CD8-positive, alpha-beta T cell (primary cell): ENCODE measurements at regions of chr21 and their contacts with region 1.

Region 1: DNA sequence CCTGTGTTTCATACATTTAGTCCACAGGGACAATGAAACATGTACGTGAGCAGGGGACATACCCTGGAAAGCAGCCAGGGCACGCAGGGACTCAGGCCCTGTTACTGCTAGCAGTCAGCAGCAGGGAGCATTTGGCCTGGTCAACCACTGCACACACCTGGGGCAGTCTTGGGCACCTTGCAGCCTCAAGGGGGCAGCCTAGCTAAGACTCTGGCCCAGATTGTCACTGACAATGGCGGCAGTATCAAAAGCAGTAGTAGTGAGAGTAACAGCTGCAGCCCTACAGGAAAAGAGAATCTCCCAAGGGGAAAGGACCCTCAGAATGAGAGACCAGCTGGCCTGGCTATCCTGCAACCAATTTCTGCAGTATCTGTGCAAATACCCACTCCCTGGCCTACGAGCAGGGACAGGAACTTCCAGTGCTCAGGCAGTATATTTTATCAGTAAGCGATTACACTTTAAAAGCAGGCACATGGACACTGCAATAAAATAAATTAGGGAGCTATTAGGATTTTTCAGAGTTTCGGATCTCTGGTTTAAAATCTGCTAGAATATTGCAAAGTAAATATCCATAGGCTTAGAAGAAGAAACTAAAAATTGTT is 475.6 kb downstream of the LTN1 start:
- DNase-seq: peak; percentile 26 to 73 (median 57)
- ATAC-seq: peak; percentile 91
- H3K4me3 ChIP-seq: no peak overlapping the region
- H3K4me3 Mint-ChIP-seq: no peak overlapping the region
- H3K27ac ChIP-seq: no peak overlapping the region
- H3K27ac Mint-ChIP-seq: no peak overlapping the region
- H3K4me1 ChIP-seq: no peaks in the 10 kb centered on the region
- H3K4me1 Mint-ChIP-seq: peaks cover 4% of the 10 kb centered on the region
- H3K27me3 ChIP-seq: no peaks in the 10 kb centered on the region
- H3K27me3 Mint-ChIP-seq: no peaks in the 10 kb centered on the region
- CTCF ChIP-seq: peak; percentile 63

Region 2: DNA sequence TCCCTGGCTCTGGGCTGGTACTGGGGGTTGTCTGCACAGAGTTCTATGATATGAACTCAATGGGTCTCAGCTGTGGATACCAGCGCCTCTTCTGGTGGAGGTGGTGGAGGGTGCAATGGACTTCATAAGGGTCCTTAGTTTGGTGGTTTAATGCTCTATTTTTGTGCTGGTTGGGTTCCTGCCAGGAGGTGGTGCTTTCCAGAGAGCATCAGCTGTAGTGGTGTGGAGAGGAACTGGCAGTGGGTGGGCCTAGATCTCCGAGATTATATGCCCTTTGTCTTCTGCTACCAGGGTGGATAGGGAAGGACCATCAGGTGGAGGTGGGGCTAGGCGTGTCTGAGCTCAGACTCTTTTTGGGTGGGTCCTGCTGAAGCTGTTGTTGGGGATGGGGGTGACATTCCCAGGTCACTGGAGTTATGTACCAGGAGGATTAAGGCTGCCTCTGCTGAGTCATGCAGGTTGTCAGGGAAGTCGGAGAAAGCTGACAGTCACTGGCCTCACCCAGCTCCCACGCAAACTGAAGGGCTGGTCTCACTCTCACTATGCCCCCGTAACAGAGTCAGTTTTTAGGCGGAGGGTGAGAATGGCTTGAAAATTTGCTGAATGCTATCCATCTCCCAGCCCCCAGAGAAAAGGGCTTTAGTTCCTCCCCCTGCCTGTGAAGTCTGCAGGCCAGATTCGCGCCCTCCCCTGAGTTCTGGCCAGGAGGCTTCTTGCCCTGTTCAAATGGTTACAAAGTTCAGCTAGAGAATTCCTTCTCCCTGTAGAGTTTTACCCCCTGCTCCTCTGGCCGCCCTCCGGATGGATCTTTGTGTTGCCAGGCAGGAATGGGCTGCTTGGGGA is 427.3 kb before region 1 on chr21:
- CTCF ChIA-PET with region 1: no interaction called
- POLR2A ChIA-PET with region 1: no interaction called
- intact Hi-C with region 1: no loop called
- DNase-seq: no peak
- ATAC-seq: no peak
- H3K4me3 ChIP-seq: no peak overlapping the region
- H3K4me3 Mint-ChIP-seq: no peak overlapping the region
- H3K27ac ChIP-seq: no peak overlapping the region
- H3K27ac Mint-ChIP-seq: no peak overlapping the region
- H3K4me1 ChIP-seq: no peaks in the 10 kb centered on the region
- H3K4me1 Mint-ChIP-seq: no peaks in the 10 kb centered on the region
- H3K27me3 ChIP-seq: no peaks in the 10 kb centered on the region
- H3K27me3 Mint-ChIP-seq: no peaks in the 10 kb centered on the region
- CTCF ChIP-seq: no peak

Region 3: DNA sequence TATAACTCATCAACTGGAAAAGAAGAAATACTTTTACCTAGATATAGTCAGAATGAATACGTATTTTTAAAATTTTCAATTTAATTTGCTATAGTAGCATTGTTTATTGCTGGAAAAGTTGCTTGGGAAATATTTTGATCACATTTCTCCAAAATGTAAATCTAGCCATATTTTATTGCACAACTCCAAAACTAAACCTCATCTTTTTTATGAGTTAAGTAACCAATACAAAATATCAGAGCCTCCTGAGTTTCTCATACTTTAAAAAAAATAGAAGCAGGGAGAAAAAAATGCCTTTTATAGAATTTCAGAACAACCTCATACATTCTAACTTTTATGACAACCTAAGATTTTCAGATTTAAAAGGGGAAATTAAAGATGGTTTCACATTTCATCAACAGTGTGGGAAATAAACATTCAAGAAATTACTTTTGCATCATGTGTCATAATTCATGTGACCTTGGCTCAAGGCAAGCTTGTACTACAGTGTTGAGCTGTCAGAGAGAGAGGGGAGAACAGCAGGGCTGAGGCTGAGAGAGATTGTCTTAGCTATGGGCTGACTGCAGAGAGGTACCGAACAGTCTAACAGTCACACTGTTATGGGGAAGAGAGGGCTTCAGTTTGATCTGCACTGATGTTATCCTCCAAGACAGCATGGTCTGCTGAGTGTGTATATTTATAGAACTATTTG is 43.4 kb before region 1 on chr21:
- CTCF ChIA-PET with region 1: no interaction called
- POLR2A ChIA-PET with region 1: no interaction called
- intact Hi-C with region 1: no loop called
- DNase-seq: no peak
- ATAC-seq: no peak
- H3K4me3 ChIP-seq: no peak overlapping the region
- H3K4me3 Mint-ChIP-seq: no peak overlapping the region
- H3K27ac ChIP-seq: no peak overlapping the region
- H3K27ac Mint-ChIP-seq: no peak overlapping the region
- H3K4me1 ChIP-seq: no peaks in the 10 kb centered on the region
- H3K4me1 Mint-ChIP-seq: no peaks in the 10 kb centered on the region
- H3K27me3 ChIP-seq: no peaks in the 10 kb centered on the region
- H3K27me3 Mint-ChIP-seq: peaks cover 5% of the 10 kb centered on the region
- CTCF ChIP-seq: no peak

Region 4: DNA sequence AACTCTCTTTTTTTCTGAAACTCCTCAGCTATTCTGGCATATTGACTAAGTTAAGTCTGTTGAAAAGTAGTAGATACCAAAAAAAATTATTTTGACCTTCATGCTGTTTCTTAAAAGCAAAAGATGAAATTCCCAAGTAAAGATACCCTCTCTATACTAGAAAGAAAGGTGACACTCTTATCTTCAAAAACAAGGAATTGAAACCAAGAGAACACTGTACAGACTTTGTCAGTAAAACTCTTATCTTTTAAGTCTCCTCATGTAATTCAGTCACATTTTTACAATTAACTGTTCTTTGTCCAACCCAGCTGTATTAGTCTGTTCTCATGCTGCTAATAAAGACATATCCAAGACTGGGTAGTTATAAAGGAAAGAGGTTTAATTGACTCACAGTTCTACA is 20.6 kb before region 1 on chr21:
- CTCF ChIA-PET with region 1: no interaction called
- POLR2A ChIA-PET with region 1: no interaction called
- intact Hi-C with region 1: no loop called
- DNase-seq: no peak
- ATAC-seq: no peak
- H3K4me3 ChIP-seq: no peak overlapping the region
- H3K4me3 Mint-ChIP-seq: no peak overlapping the region
- H3K27ac ChIP-seq: no peak overlapping the region
- H3K27ac Mint-ChIP-seq: no peak overlapping the region
- H3K4me1 ChIP-seq: no peaks in the 10 kb centered on the region
- H3K4me1 Mint-ChIP-seq: no peaks in the 10 kb centered on the region
- H3K27me3 ChIP-seq: no peaks in the 10 kb centered on the region
- H3K27me3 Mint-ChIP-seq: no peaks in the 10 kb centered on the region
- CTCF ChIP-seq: no peak

Region 5: DNA sequence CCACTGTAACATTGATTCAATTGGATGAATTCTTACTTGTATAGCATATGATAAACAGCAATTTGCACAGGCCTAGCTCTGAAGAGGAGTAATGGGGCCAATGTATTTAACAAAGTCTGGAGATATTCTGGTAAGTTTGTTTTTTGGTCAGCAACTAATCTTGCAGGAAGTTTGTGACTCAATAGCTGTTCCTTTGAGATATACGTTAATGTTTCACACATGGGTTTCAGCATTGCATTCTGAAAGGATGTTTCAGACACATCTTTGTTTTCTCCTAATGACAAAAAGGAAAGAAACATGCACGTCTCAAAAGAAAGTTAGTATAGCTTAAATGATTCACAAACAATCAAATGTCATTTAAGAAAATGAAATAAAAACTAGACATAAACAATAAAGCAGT is 426.5 kb after region 1 on chr21:
- CTCF ChIA-PET with region 1: interaction called, 13 read pairs
- POLR2A ChIA-PET with region 1: no interaction called
- intact Hi-C with region 1: loop called (anchors 1 kb)
- DNase-seq: no peak
- ATAC-seq: no peak
- H3K4me3 ChIP-seq: no peak overlapping the region
- H3K4me3 Mint-ChIP-seq: no peak overlapping the region
- H3K27ac ChIP-seq: no peak overlapping the region
- H3K27ac Mint-ChIP-seq: no peak overlapping the region
- H3K4me1 ChIP-seq: no peaks in the 10 kb centered on the region
- H3K4me1 Mint-ChIP-seq: peaks cover 2% of the 10 kb centered on the region
- H3K27me3 ChIP-seq: no peaks in the 10 kb centered on the region
- H3K27me3 Mint-ChIP-seq: no peaks in the 10 kb centered on the region
- CTCF ChIP-seq: no peak